ENCODE measurements at regions of chr14 and their contacts with region 1.

Region 1: DNA sequence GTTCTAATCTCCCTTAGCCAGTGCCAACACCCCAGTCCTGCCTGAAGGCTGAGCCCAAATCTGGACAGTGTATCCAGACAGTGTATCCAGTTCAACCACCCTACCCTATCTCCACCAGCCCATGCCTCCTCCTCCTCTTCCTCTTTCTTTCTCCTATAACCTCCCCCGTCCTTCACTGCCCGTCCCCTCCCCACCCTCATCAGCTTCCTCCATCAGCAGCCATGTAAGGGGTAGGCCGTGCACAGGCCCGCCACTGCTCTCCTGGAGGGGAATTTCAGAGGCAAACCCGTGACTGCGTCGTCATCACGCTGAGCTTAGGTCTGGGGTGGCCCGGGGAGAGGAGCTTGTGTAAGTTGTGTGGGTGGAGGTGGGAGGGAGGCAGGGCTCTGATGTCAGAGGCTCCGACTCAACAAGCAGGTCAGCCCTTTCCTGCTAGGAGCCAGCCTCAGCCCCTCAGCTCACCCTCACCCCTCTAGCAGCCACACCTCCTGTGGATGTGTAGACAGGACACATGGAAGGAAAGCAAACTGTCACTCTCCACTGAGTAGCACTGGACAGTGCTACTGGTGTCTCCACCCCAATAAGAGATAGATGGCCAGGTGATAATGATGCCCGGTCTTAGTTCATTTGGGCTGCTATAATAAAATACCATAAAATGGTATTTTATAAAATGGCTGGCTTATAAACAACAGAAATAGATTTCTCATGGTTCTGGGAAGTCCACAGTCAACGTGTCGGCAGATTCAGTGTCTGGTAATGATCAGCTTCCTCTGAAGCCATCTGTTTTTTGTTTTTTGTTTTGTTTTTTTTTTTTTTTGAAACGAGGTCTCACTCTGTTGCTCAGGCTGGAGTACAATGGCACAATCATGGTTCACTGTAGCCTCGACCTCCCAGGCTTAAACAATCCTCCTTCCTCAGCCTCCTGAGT is 50.5 kb downstream of the IRF2BPL start:
- DNase-seq: peak; percentile 94 to 97 (median 97)
- H3K4me3 ChIP-seq: peak overlapping the region in 1 of 7 experiments; percentile 20
- H3K27ac ChIP-seq: peak overlapping the region; percentile 41 to 68
- H3K4me1 ChIP-seq: peaks cover 4 to 44% (median 27%) of the 10 kb centered on the region in 4 experiments
- H3K27me3 ChIP-seq: no peaks in the 10 kb centered on the region

Region 2: GRCh38 chr14:76956316-76957090 is 21.6 kb before region 1 on chr14:
- CTCF ChIA-PET with region 1: interaction called, 10 read pairs
- POLR2A ChIA-PET with region 1: interaction called, 4 read pairs
- DNase-seq: peak; percentile 93 to 97 (median 97)
- H3K4me3 ChIP-seq: peak overlapping the region in 6 of 7 experiments; percentile 36 to 72 (median 60)
- H3K27ac ChIP-seq: peak overlapping the region; percentile 19 to 70
- H3K4me1 ChIP-seq: peaks cover 2 to 75% (median 62%) of the 10 kb centered on the region in 4 experiments
- H3K27me3 ChIP-seq: no peaks in the 10 kb centered on the region

Measured in common myeloid progenitor, CD34-positive (primary cell).